ENCODE measurements at regions of chr2 and their contacts with region 1.

Region 1: DNA sequence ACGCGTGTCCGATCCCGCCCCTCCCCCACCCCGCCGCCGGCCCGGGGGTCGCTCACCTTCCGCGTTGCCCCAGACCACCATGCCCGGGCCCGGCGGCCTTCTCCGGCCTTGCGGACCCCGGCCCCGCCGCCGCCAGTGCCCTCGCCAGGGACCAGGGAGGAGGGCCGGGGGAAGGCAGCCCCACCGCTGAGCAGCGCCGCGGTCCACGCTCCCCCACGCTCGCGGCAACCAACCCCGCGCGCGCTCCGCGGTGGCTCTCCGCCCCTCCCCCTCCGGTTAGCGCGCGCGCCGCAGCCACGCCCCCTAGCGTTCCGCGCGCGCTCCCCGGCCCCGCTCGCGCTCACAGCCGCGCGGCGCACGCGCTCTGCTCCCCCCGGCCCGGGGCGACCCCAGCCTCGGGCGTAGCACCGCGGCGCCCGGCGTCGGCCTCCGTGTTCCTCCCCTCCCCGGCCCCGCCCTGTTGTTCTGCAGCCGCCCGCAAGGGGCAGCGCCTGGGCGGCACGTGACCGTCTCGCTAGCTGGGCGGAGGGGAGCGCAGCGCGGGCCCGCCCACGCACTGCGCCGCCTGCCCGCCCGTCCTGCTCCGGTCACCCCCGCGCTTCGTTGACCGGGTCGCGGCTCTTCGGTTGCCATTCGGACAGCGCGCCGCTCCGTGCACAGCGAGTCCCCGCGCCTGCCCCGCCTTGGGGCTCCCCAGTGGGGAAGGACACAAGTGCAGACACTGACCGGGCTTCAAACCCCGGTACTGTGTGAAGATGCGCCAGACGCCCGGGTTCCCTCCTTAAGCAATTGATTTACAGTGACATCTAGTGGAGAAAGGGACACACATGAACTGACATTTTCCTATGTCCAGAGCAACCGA is at the start of gene REV1:
- DNase-seq: peak; percentile 96 to 98 (median 98)
- H3K4me3 ChIP-seq: peak within 1 kb of the TSS; percentile 73 to 95 (median 92)
- H3K27ac ChIP-seq: peak within 1 kb of the TSS; percentile 62 to 89
- H3K4me1 ChIP-seq: peaks cover 4 to 29% (median 20%) of the 10 kb centered on the region in 4 experiments
- H3K27me3 ChIP-seq: no peaks in the 10 kb centered on the region

Region 2: DNA sequence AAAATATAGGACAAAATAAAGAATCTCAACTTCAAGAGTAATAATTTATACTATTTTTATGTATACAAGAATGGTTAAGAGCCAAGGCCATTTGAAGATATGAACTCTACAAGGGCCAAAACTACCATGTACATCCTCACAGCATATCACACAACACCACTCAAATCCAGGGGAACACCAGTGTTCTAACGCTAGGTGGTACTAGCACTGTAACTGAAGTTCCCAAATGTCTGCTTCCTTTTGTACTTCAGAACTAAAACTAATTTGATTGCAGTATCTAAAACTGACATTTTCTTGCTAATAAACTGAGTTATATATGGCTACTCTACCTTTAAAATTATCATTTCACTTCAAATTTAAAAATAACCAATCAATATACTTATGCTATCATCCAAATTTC is 47.2 kb before region 1 on chr2:
- CTCF ChIA-PET with region 1: interaction called, 13 read pairs
- POLR2A ChIA-PET with region 1: no interaction called
- DNase-seq: peak; percentile 38 to 73 (median 63)
- H3K4me3 ChIP-seq: no peak overlapping the region
- H3K27ac ChIP-seq: no peak overlapping the region
- H3K4me1 ChIP-seq: no peaks in the 10 kb centered on the region
- H3K27me3 ChIP-seq: no peaks in the 10 kb centered on the region

Measured in common myeloid progenitor, CD34-positive (primary cell).